Posterior vena cava (tissue), 2 donors: ENCODE measurements at regions of chr15 and their contacts with region 1.

Region 1: DNA sequence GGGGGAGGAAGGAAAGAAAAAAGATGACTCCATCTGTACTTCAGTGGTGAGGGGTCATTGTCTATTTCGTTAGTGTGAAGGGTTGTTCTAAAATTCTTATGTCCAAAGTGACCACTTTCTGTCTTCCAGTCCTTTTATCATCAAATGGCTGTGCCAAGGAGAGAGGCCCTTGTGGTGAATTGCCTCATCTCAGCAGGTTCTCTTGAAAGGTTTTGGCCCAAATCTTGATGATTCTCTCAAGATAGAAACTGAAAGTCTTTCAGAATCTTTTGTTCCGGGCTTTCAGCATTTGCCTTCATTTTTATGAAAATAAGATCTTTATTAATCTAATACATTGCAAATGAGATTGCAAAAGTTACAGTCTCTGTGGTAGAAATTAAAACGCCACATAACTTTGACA is 575.8 kb downstream of the RSL24D1 start:
- DNase-seq: no peak

Region 2: GRCh38 chr15:54131410-54131809 is 489.5 kb before region 1 on chr15:
- intact Hi-C with region 1: no loop called
- DNase-seq: no peak

Region 3: GRCh38 chr15:54594115-54594514 is 26.8 kb before region 1 on chr15:
- intact Hi-C with region 1: loop called in 1 of 2 experiments (anchors 1 kb)
- DNase-seq: no peak